Activated CD4-positive, alpha-beta memory T cell treated with anti-CD3 and anti-CD28 coated beads for 36 hours (primary cell): ENCODE measurements at regions of chrX and their contacts with region 1.

Region 1: DNA sequence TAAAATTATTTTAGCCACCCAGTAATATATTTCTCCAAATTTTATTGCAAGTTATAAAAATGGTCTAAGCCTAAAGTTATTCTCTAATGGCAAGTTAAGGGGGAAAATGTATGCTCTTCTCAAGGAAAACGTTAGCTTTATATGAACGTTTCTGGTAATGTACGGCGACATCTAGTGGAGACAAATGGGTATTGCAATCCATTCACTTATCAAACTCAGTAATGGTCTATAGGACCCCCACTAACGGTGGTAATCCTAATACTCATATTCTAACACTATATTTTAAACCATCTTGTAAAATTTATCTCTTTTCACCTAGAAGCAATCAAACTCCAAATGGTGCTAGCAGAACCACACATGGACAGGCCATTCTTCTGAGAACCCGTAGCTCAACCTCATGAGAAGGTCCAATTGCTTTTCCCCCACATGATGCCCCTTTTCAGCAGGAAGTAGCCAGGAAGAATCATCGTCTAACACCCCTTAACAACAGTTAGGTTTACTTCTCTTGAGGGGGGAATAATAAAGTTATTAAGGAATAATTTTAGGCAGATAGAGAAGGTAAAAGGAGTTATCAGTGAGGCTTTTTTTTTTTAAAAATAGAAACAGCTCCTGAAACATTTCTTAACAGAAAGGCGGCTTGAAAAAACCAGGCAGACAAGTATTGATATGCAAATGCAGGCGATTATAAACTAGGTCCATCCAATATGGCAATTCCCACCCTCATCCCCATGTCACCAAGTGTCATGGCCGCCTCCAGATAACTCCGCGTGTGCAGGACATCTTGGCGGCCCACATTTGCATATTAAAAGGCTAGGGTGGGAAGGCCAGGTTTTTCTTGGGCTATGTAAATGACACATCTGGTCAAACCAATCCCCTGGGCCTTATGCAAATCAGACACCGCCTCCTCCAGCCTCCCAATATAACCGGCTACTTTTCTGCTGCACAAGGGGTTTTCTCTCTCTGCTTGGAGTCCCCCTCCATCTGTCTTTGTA is 35.0 kb downstream of the NUDT11 start:
- DNase-seq: no peak
- H3K4me3 Mint-ChIP-seq: no peak overlapping the region
- H3K27ac Mint-ChIP-seq: no peak overlapping the region
- H3K4me1 Mint-ChIP-seq: no peaks in the 10 kb centered on the region
- H3K27me3 Mint-ChIP-seq: no peaks in the 10 kb centered on the region

Region 2: DNA sequence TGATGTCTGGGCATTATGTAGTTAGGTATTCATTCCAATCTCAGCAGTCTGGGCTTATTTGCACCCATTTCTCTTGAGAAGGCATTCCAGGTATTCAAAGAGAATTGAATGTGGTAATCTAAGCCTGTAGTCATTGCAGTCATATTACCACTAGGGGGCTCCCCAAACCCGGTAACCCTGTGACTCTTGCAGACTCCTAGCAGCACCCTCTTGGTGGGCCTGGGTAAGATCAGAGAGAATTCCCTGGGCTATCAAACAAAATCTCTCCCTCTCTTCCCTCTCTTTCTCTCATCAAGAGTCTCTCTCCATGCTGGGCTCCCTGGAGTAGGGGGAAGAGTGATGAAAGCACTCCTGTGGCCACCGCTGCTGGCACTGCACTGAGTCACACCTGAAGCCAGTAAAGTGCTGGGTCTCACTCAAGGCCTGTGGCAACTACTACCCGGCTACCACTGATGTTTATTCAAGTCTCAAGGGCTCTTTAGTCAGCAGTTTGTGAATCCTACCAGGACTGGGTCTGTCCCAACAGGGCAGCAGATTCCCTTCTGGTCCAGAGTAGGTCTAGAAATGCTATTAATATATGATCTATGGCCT is 316.4 kb before region 1 on chrX:
- CTCF ChIA-PET with region 1: interaction called, 7 read pairs
- POLR2A ChIA-PET with region 1: no interaction called
- intact Hi-C with region 1: loop called (anchors 5 kb)
- DNase-seq: peak; percentile 27
- H3K4me3 Mint-ChIP-seq: no peak overlapping the region
- H3K27ac Mint-ChIP-seq: no peak overlapping the region
- H3K4me1 Mint-ChIP-seq: no peaks in the 10 kb centered on the region
- H3K27me3 Mint-ChIP-seq: peaks cover 15% of the 10 kb centered on the region

Region 3: DNA sequence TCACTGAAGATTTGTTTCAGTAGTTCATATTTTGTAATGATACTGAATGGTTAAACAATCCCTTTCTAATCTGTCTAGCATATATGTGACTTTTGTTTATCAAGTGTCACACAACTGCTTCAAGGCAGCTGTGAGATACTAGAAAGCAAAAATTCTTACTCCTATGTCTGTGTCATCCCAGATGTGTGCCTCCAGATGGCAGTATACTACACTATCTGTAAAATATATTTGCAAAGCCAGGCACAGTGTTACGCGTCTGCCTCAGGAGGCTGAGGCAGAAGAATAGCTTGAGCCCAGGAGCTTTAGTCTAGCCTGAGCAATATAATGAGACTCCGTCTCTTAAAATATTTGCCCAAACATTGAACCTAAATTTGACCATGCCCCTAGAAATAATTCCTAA is 124.8 kb before region 1 on chrX:
- CTCF ChIA-PET with region 1: interaction called, 50 read pairs
- POLR2A ChIA-PET with region 1: no interaction called
- intact Hi-C with region 1: loop called (anchors 1 kb)
- DNase-seq: peak; percentile 22
- H3K4me3 Mint-ChIP-seq: no peak overlapping the region
- H3K27ac Mint-ChIP-seq: no peak overlapping the region
- H3K4me1 Mint-ChIP-seq: peaks cover 5% of the 10 kb centered on the region
- H3K27me3 Mint-ChIP-seq: peaks cover 3% of the 10 kb centered on the region

Region 4: GRCh38 chrX:51802917-51803688 is 341.8 kb after region 1 on chrX:
- CTCF ChIA-PET with region 1: no interaction called
- POLR2A ChIA-PET with region 1: no interaction called
- intact Hi-C with region 1: no loop called
- DNase-seq: peak; percentile 71
- H3K4me3 Mint-ChIP-seq: peak overlapping the region; percentile 97
- H3K27ac Mint-ChIP-seq: peak overlapping the region; percentile 97
- H3K4me1 Mint-ChIP-seq: peaks cover 25% of the 10 kb centered on the region
- H3K27me3 Mint-ChIP-seq: no peaks in the 10 kb centered on the region